ENCODE measurements at regions of chr1 and their contacts with region 1.

Region 1: GRCh38 chr1:152182431-152182830 is 23.4 kb upstream of the RPTN start:
- DNase-seq: no peak
- H3K4me3 ChIP-seq: no peak overlapping the region
- H3K27ac ChIP-seq: no peak overlapping the region
- H3K27me3 ChIP-seq: peaks cover 0 to 5% (median 0%) of the 10 kb centered on the region in 45 donors
- CTCF ChIP-seq: peak in 50 of 56 donors; percentile 14 to 58 (median 42)

Region 2: DNA sequence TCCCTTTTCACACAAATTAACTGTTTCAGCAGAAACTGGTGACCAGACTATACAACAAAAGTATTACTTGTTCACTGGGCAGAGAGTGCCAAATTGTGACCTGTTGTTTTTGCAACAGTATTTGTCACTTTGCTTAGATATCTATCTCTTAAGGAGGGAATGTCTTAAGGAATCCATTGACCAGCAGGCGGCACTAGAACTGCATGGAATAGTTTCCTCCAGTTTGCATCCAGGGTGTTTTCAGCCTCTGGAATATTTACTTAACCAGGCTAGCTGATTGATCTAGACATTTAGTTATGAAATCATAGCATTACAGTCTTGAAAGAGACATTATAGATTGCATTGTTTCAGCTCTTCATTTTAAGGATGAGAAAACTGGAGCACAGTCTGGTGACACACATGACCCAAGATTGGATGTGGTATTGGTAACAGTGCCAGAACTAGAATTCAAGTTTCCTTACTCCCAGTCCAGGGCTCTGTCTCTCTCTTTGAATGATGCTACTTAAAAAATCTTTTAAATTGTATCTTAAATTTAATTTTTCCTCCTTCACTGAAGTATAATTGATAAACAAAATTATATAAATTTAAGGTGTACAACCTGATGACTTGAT is 40.4 kb before region 1 on chr1:
- intact Hi-C with region 1: loop called (anchors 2 to 5 kb)
- DNase-seq: peak in 4 of 10 donors; percentile 4 to 61 (median 42)
- H3K4me3 ChIP-seq: no peak overlapping the region
- H3K27ac ChIP-seq: no peak overlapping the region
- H3K27me3 ChIP-seq: peaks cover 0 to 14% (median 0%) of the 10 kb centered on the region in 45 donors
- CTCF ChIP-seq: peak; percentile 55 to 91 (median 71)

Region 3: DNA sequence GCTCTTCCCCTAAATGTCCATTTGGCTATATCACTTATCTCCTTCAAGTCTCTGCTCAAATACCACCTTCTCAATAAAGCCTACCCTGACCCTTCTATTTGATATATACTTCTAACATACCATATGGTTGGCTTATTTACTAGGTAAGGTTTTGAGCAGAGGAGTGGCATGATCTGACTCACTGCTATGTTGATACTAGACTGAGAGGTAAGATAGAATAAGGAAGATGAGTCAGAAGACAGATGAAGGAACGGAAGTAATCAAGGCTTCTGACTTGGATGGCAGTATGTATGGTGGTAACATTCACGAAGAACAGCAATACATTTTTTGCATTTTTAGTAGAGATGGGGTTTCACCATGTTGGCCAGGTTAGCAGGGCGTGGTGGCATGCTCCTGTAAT is 46.4 kb after region 1 on chr1:
- intact Hi-C with region 1: loop called in 1 of 2 experiments (anchors 2 kb)
- DNase-seq: no peak
- H3K4me3 ChIP-seq: no peak overlapping the region
- H3K27ac ChIP-seq: no peak overlapping the region
- H3K27me3 ChIP-seq: peaks cover 0 to 10% (median 0%) of the 10 kb centered on the region in 45 donors
- CTCF ChIP-seq: no peak

Region 4: GRCh38 chr1:152244576-152245273 is 62.3 kb after region 1 on chr1:
- intact Hi-C with region 1: no loop called
- DNase-seq: no peak
- H3K4me3 ChIP-seq: no peak overlapping the region
- H3K27ac ChIP-seq: no peak overlapping the region
- H3K27me3 ChIP-seq: peaks cover 0 to 13% (median 0%) of the 10 kb centered on the region in 45 donors
- CTCF ChIP-seq: no peak

Measured in dorsolateral prefrontal cortex (tissue), 120 donors.